Posterior cingulate gyrus (tissue), 11 donors: ENCODE measurements at regions of chr20 and their contacts with region 1.

Region 1: DNA sequence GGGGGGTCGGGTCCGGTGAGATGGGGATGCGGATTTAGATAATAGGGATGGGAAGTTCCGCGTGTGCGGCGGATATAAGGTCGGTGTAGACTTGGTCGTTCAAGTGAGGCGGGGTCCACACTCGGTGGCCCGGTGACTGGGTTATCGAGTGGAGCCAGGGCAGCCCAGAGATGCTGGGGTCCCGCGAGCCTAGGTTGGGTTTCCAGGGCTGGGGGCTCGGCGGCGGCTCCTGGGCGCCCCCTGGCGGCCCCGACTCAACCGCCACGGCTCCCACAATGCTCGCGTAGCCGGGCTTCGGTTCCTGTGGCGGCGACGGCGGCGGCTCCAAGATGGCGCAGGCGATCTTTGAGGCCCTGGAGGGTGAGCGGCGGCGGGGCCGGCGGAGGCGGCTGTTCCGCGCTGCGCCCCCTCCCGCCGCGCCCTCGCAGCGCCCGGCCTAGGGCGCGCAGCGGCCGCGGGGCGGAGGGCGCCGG is at the start of gene ZNF341:
- DNase-seq: peak; percentile 78 to 98 (median 88)

Region 2: DNA sequence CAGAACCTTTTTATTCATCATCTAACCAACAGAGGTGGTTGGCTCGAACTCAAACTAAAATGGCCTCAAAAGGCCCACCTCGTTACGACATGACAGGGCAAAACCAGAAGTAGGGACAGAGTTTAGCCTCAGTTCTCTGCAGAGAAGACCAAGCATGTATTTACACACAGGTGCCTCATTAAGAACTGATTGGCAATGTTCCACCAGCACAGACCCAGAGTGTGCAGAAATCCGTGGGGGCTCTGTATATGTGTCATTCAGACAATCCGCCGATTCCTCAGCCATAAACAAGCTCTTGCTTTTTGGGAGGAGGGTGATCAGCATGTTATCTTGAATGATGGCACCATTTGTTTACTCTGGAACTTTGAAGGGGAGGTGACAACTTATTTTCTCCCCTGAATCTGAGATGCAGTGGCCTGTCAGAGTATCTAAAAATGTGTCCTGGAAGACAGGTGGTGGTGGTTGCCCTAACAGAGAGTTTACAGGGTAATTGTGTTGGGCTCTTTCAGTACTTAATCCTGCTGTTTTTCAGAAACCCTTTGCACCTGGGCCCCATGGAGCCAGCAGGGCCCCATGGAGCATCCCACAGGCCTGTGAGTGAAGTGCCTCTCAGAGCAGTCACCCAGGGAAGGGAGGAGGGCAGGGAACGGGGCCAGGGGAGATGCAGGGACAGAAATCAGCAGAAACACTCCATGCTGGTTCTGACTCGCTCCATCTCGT is 1028.9 kb before region 1 on chr20:
- intact Hi-C with region 1: no loop called
- DNase-seq: peak in 2 of 10 donors; percentile 18 to 30

Region 3: DNA sequence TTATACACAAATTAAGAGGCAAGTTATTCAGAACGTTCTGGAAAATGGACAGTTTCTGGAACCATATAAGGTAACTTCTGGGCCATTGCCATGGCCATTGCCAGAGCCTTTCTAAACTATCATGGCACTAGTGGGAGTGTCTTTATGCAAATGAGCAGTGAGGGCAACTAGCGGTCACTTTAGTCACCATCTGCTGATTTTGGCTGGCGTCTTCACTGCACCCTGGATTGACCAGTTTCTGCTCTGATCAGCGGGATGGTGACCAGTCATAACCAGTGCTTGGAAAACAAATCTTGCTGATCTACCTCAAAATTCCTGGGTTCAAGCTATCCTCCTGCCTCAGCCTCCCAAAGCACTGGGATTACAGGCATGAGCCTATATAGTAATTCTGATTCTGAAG is 280.9 kb before region 1 on chr20:
- intact Hi-C with region 1: loop called (anchors 10 kb)
- DNase-seq: no peak

Region 4: DNA sequence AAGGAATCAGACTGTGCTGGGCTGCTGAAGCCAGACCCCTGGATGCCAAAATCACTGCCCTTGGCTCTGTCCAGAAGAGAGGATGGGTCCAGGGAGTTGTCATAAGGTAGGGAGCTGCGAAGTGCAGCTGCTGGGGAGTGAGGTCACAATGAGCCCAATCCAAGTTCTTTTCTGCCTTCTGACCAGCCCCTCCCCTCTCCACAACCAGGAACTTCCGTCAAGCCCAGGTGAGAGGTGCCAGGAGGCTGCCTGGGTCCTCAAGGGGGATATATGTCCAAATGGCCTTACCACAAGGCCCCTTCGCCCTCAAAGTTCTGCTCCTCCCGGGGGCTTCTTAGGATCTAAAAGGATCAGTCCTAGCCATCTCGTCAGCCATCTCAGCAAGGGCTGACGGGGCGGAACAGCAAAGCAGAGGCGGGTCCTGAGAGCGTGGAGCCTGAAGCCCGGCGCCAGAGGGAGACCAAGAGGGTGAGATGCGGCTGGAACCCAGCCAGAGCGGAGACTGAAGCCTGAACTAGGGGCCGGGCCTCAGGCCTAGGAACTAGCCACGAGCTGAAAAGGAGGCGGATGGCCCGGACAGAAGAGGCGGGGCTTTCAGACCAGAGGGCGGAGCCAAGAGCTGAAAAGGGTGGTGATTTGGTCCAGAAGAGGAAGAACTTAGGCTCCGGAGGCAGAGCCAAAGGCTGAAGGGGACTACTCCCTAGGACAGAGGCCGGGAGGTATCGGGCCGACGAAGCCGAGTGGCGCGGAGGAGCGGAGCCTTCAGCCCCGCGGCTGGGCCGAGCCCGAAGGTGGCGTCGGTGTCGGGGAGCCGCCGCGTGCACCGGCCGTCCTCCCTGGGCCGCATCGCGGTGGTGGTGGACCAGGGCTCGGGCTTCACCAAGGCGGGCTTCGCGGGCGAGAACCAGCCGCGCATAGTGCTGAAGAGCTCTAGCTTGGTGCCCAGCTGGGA is 65.2 kb before region 1 on chr20 and contains the start of gene ACTL10:
- intact Hi-C with region 1: loop called (anchors 5 kb)
- DNase-seq: peak; percentile 85 to 98 (median 91)

Region 5: GRCh38 chr20:33686100-33686983 is 45.4 kb before region 1 on chr20 and contains the start of gene E2F1:
- intact Hi-C with region 1: loop called (anchors 5 kb)
- DNase-seq: peak; percentile 92 to 99 (median 96)

Region 6: GRCh38 chr20:33810885-33811777 is 79.4 kb after region 1 on chr20 and contains the start of gene CHMP4B:
- intact Hi-C with region 1: loop called (anchors 10 kb)
- DNase-seq: peak; percentile 98 to 100 (median 99)

Region 7: DNA sequence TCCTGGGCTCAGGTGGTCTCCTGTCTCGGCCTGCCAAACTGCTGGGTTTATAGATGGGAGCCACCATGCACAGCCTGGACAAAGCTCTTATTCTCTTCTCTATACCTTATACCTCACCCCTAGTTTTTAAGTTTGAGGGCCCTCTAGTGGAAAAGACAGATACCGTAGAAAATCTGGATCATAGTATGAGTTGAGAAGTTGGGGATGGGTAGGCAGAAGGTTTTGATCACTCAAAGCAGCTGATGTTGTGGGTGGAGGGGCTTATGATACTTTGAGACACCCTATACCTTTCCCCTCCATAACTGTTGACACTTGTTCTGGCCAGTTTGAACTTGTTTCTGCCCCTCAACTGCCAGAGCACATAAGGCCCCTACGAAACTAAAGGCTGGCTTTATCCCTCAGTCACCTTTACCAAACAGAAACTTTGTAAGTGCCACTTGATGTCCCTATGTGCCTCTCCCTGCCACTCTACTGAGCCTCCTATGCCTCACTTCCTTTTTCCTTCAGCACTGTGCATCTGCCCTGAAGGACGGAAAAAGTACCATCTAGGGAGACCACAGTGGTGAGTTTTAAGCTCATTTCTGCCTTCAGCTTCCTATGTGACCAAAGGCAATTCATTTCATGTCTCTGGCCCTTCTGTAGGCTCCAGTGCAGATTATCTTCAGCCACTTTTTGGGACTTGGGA is 290.6 kb after region 1 on chr20:
- intact Hi-C with region 1: no loop called
- DNase-seq: no peak

Region 8: GRCh38 chr20:34069341-34070078 is 337.8 kb after region 1 on chr20:
- intact Hi-C with region 1: no loop called
- DNase-seq: peak; percentile 50 to 97 (median 80)

Region 9: GRCh38 chr20:35297155-35297554 is 1565.4 kb after region 1 on chr20:
- intact Hi-C with region 1: no loop called
- DNase-seq: peak in 1 of 10 donors; percentile 63